ENCODE measurements at regions of chr10 and their contacts with region 1.

Region 1: GRCh38 chr10:11986593-11987216 is 55.9 kb downstream of the UPF2 start:
- DNase-seq: peak; percentile 79
- ATAC-seq: peak; percentile 77
- H3K4me3 ChIP-seq: no peak overlapping the region
- H3K27ac ChIP-seq: no peak overlapping the region; the same call in 1 of the 2 replicates
- H3K4me1 ChIP-seq: peaks cover 0 to 16% of the 10 kb centered on the region in 2 experiments; a peak in 2 of 4 replicates
- H3K27me3 ChIP-seq: no peaks in the 10 kb centered on the region
- CTCF ChIP-seq: peak; percentile 76 to 92 (median 90)
- POLR2A ChIP-seq: no peak
- RAD21 ChIP-seq: peak; percentile 98

Region 2: GRCh38 chr10:11301571-11302111 is 685.1 kb before region 1 on chr10:
- CTCF ChIA-PET with region 1: no interaction called
- POLR2A ChIA-PET with region 1: no interaction called
- RAD21 ChIA-PET with region 1: no interaction called
- intact Hi-C with region 1: no loop called
- DNase-seq: no peak
- ATAC-seq: no peak
- H3K4me3 ChIP-seq: no peak overlapping the region
- H3K27ac ChIP-seq: no peak overlapping the region
- H3K4me1 ChIP-seq: no peaks in the 10 kb centered on the region
- H3K27me3 ChIP-seq: no peaks in the 10 kb centered on the region
- CTCF ChIP-seq: no peak
- POLR2A ChIP-seq: no peak
- RAD21 ChIP-seq: no peak

Region 3: DNA sequence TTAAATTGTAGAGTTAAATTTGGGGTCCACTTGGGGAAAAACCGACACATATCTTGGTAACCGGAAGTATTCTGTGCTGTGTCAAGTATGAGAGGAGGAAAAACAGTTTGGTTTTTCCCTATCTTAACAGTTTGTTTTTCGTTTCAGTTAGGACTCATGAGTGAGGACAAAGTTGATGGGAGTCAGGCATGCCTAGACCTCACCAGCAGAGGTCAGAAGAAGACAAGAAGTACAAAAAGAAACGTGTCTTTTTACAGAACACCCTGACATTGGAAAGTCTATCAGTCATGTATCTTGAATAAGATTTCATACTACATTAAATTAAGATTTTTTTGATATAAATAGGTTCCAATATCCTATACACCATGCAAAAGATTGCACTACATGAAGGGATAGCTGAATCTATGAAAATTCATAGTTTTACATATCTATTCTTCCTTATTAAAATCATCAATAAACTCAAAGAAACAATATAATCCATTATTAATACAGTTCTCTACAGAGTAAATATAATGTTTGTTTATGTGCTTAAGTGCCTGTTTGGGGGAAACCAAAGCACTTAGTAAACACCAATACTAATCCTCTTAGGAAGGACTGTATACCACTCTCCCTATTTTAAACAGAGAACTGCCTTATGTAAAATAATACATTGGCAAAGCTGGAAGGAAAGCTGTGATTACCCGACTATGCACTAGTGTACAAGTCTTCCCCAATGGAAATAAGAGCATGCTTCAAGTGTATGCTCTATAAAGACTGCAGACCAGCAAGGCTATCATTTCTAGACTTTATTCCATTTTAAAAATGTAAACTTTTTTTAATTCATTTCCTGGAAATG is 470.9 kb before region 1 on chr10:
- CTCF ChIA-PET with region 1: no interaction called
- POLR2A ChIA-PET with region 1: no interaction called
- RAD21 ChIA-PET with region 1: no interaction called
- intact Hi-C with region 1: loop called (anchors 5 kb)
- DNase-seq: peak; percentile 54
- ATAC-seq: peak; percentile 91
- H3K4me3 ChIP-seq: no peak overlapping the region
- H3K27ac ChIP-seq: no peak overlapping the region
- H3K4me1 ChIP-seq: peaks cover 0 to 14% of the 10 kb centered on the region in 2 experiments; a peak in 1 of 4 replicates
- H3K27me3 ChIP-seq: no peaks in the 10 kb centered on the region
- CTCF ChIP-seq: peak; percentile 77 to 85 (median 81)
- POLR2A ChIP-seq: no peak
- RAD21 ChIP-seq: peak; percentile 92

Region 4: DNA sequence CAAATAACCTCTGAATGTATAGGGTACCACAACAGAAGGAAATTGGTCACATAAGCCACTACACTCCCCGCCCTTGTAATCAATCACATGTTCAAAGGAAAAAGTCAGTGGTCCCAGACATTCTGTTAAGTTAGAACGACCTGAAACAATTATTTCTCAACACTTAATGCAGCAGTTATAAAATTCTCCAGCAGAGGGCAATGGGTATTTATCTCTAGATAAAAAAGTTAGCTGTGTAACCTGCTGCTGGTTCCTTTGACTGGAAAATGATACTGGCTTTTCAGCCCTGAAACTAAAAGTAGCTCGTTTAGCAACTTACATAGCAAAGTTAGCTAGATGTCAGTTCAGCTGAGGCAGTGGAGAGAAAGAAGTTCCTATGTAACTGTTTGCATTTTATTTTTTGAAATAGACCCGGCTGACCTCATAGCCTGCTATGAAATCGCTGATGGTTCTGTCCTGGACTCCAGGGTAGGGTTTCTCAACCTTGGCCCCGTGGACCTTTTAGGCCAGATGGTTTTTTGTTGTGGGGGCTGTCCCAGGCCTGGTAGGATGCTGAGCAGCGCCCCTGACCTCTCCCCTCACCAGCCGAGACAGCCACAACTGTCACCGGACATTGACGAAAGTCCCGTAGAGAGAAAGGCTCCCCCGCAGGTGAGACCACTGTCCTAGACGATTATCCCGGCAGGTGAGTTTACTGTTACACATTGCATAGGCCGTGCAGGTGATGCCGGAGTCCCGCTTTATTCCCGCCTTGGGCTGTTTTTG is 203.7 kb before region 1 on chr10:
- CTCF ChIA-PET with region 1: interaction called, 76 read pairs
- POLR2A ChIA-PET with region 1: no interaction called
- RAD21 ChIA-PET with region 1: interaction called, 3 to 6 read pairs
- intact Hi-C with region 1: loop called (anchors 1 kb)
- DNase-seq: peak; percentile 51
- ATAC-seq: peak; percentile 83
- H3K4me3 ChIP-seq: no peak overlapping the region
- H3K27ac ChIP-seq: no peak overlapping the region
- H3K4me1 ChIP-seq: peaks cover 0 to 9% of the 10 kb centered on the region in 2 experiments; a peak in 1 of 4 replicates
- H3K27me3 ChIP-seq: no peaks in the 10 kb centered on the region
- CTCF ChIP-seq: peak; percentile 67 to 81 (median 75)
- POLR2A ChIP-seq: no peak
- RAD21 ChIP-seq: peak; percentile 86

Region 5: DNA sequence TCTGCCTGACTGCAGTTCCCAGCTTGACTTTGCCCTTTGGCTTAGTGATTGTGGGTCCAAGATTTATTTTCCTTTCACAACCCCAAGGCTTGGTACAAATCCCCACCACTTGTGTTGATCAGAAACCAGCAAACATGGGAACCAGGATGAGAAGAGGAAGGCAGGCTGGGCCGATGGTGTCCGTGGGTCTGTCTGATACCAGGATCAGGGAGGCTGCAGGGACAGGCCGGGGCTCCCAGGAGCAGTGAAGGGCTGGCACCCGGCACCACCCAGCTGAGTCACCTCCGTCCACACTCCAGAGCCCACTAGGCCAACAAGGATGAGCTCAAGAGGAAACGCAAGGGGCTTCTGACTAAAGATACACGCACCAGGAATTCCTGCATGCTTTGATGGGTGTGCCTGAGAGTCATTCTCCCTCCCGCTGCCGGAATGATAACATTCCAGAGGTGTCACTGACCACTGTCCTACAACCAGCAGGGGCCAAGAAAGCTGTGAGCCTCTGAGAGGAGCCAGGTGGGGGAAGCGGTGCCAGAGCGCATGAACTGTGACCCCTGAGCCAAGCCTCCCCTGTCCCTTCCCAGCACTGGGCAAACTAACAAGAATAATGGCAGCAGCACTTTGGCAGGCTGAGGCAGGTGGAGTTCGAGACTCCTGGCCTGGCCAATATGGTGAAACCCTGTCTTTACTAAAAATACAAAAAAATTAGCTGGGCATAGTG is 192.8 kb before region 1 on chr10:
- CTCF ChIA-PET with region 1: interaction called, 43 read pairs
- POLR2A ChIA-PET with region 1: no interaction called
- RAD21 ChIA-PET with region 1: interaction called in 1 of 2 experiments, 3 read pairs
- intact Hi-C with region 1: loop called (anchors 1 kb)
- DNase-seq: peak; percentile 86
- ATAC-seq: peak; percentile 86
- H3K4me3 ChIP-seq: peak overlapping the region; percentile 5 to 42
- H3K27ac ChIP-seq: peak overlapping the region; percentile 68
- H3K4me1 ChIP-seq: peaks cover 14 to 45% of the 10 kb centered on the region in 2 experiments
- H3K27me3 ChIP-seq: no peaks in the 10 kb centered on the region
- CTCF ChIP-seq: no peak; a peak in 1 of 6 replicates
- POLR2A ChIP-seq: no peak
- RAD21 ChIP-seq: no peak; the same call in 1 of the 2 replicates

Region 6: DNA sequence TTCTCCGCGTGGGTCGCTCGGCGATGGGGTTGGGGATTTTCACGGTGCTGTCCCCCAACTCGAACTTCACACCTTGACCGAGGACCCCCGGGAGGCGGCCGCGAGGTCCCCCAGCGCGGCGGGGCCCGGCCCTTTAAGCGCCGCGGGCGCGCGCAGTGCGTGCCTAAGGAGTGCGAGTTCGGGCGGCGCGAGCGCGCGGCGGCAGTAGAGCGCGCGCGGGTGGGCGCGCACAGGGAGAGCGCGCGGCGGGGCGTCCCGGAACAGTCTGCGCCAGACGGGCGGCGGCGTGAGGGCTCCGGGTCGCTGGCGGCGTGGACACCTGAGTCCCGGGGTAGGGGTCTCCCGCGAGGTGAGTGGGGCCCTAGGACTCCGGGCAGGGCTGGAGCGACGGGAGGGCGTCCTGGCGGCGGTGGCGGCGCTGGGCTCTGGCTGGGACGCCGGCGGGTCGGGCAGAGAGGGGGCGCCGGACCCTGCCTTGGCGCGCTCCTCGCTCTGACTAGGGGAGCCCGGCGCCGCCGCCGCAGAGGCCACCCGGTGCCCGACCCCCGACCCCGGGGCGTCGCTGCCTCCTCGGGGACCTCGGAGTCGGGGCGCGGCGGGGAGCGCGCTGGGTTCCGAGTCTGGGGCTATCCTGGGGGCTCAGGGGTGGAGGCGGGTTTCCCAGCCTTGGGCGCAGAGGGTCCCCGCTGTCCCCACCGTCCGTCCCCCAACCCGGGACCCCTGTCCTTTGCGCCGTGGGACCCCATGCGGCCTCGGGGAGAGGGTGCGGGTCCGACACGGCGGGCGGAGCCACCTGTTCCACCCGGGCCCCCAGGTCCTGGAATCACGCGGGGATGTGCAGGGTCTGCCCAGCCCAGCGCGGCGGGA is 163.3 kb before region 1 on chr10 and contains the start of gene PROSER2:
- CTCF ChIA-PET with region 1: interaction called, 13 read pairs
- POLR2A ChIA-PET with region 1: no interaction called
- RAD21 ChIA-PET with region 1: no interaction called
- intact Hi-C with region 1: no loop called
- DNase-seq: peak; percentile 27
- ATAC-seq: peak; percentile 85
- H3K4me3 ChIP-seq: peak within 1 kb of the TSS; percentile 80 to 89
- H3K27ac ChIP-seq: peak within 1 kb of the TSS; percentile 73; the same call in 1 of the 2 replicates
- H3K4me1 ChIP-seq: peaks cover 15 to 62% of the 10 kb centered on the region in 2 experiments
- H3K27me3 ChIP-seq: no peaks in the 10 kb centered on the region
- CTCF ChIP-seq: peak in 1 of 3 experiments; percentile 4; a peak in 1 of 6 replicates
- POLR2A ChIP-seq: peak; percentile 75
- RAD21 ChIP-seq: no peak
- total RNA-seq, gene PROSER2: 46.2 TPM

Region 7: GRCh38 chr10:11881477-11882417 is 105.0 kb before region 1 on chr10:
- CTCF ChIA-PET with region 1: interaction called, 18 read pairs
- POLR2A ChIA-PET with region 1: interaction called, 5 read pairs
- RAD21 ChIA-PET with region 1: interaction called, 3 to 6 read pairs
- intact Hi-C with region 1: loop called (anchors 1 kb)
- DNase-seq: peak; percentile 94
- ATAC-seq: peak; percentile 82
- H3K4me3 ChIP-seq: peak overlapping the region in 1 of 2 experiments; percentile 28; a peak in 2 of 4 replicates
- H3K27ac ChIP-seq: peak overlapping the region; percentile 85
- H3K4me1 ChIP-seq: peaks cover 34 to 87% of the 10 kb centered on the region in 2 experiments
- H3K27me3 ChIP-seq: no peaks in the 10 kb centered on the region
- CTCF ChIP-seq: peak in 1 of 3 experiments; percentile 45; a peak in 2 of 6 replicates
- POLR2A ChIP-seq: no peak
- RAD21 ChIP-seq: no peak

Region 8: GRCh38 chr10:12042797-12043651 is 56.3 kb after region 1 on chr10 and contains the start of gene UPF2:
- CTCF ChIA-PET with region 1: interaction called, 10 read pairs
- POLR2A ChIA-PET with region 1: no interaction called
- RAD21 ChIA-PET with region 1: no interaction called
- intact Hi-C with region 1: no loop called
- DNase-seq: peak; percentile 97
- ATAC-seq: peak; percentile 90
- H3K4me3 ChIP-seq: peak within 1 kb of the TSS; percentile 97
- H3K27ac ChIP-seq: peak within 1 kb of the TSS; percentile 98
- H3K4me1 ChIP-seq: peaks cover 10 to 27% of the 10 kb centered on the region in 2 experiments; a peak in 3 of 4 replicates
- H3K27me3 ChIP-seq: no peaks in the 10 kb centered on the region
- CTCF ChIP-seq: no peak
- POLR2A ChIP-seq: peak; percentile 46
- RAD21 ChIP-seq: no peak
- total RNA-seq, gene UPF2: 27.3 TPM